Activated T-helper 1 cell treated with anti-CD3 and anti-CD28 coated beads, Interleukin-12 subunit alpha, Interleukin-12 subunit beta, Interleukin-2, Interleukin-4 antibody, amounts not matched to agents 30 ng/mL and 10 ng/mL and 1 ng/mL, durations not matched to agents 14 hours and 24 hours and 36 hours (primary cell): ENCODE measurements at regions of chr9 and their contacts with region 1.

Region 1: GRCh38 chr9:34759432-34760134 is 49.6 kb upstream of the CCL21 start:
- DNase-seq: no peak
- H3K4me3 Mint-ChIP-seq: no peak overlapping the region
- H3K27ac Mint-ChIP-seq: no peak overlapping the region
- H3K4me1 Mint-ChIP-seq: no peaks in the 10 kb centered on the region
- H3K27me3 Mint-ChIP-seq: peaks cover 33% of the 10 kb centered on the region

Region 2: DNA sequence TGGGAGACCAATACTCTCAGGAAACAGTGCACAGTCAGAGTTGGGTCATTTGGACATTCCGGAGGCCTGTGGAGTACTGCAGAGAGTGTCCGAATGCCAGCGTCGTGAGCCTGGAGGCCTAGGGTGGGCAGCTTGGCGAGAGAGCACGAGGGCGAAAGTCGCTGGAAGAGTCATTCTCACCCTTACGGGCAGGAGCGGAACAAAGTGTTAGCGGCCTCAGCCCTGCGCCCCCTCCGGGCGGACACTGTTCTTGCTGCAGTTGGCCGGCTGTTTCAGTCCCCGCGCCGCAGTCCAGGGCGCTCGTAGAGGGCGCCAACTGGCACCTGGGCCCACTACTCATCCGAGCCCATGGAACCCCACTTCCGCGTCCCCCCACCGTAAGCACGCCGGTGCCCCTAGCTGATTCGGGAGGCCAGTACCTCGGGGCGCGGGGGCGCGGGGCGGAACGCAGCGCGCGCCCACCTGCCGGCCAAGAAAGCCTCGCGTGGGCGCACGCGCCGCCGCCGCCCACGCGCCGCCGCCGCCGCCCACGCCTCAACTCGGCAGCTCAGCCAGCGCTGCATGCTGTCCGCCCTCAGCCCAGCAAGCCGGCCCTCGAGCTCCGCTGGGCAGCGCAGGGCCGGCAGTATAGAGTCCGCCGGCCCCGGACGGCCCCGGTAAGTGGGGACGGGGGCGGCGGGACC is 50.1 kb after region 1 on chr9:
- intact Hi-C with region 1: loop called (anchors 10 kb)
- DNase-seq: no peak
- H3K4me3 Mint-ChIP-seq: no peak overlapping the region
- H3K27ac Mint-ChIP-seq: no peak overlapping the region
- H3K4me1 Mint-ChIP-seq: no peaks in the 10 kb centered on the region
- H3K27me3 Mint-ChIP-seq: peaks cover 27% of the 10 kb centered on the region

Region 3: GRCh38 chr9:34825775-34826174 is 66.2 kb after region 1 on chr9:
- intact Hi-C with region 1: no loop called
- DNase-seq: no peak
- H3K4me3 Mint-ChIP-seq: no peak overlapping the region
- H3K27ac Mint-ChIP-seq: no peak overlapping the region
- H3K4me1 Mint-ChIP-seq: no peaks in the 10 kb centered on the region
- H3K27me3 Mint-ChIP-seq: peaks cover 4% of the 10 kb centered on the region

Region 4: GRCh38 chr9:35051069-35051967 is 291.7 kb after region 1 on chr9:
- intact Hi-C with region 1: loop called (anchors 2 kb)
- DNase-seq: peak; percentile 29
- H3K4me3 Mint-ChIP-seq: no peak overlapping the region
- H3K27ac Mint-ChIP-seq: peak overlapping the region; percentile 27
- H3K4me1 Mint-ChIP-seq: peaks cover 5% of the 10 kb centered on the region
- H3K27me3 Mint-ChIP-seq: no peaks in the 10 kb centered on the region

Region 5: GRCh38 chr9:35778496-35778895 is 1018.9 kb after region 1 on chr9:
- intact Hi-C with region 1: no loop called
- DNase-seq: no peak
- H3K4me3 Mint-ChIP-seq: no peak overlapping the region
- H3K27ac Mint-ChIP-seq: no peak overlapping the region
- H3K4me1 Mint-ChIP-seq: peaks cover 13% of the 10 kb centered on the region
- H3K27me3 Mint-ChIP-seq: no peaks in the 10 kb centered on the region